ENCODE measurements at regions of chr7 and their contacts with region 1.

Region 1: DNA sequence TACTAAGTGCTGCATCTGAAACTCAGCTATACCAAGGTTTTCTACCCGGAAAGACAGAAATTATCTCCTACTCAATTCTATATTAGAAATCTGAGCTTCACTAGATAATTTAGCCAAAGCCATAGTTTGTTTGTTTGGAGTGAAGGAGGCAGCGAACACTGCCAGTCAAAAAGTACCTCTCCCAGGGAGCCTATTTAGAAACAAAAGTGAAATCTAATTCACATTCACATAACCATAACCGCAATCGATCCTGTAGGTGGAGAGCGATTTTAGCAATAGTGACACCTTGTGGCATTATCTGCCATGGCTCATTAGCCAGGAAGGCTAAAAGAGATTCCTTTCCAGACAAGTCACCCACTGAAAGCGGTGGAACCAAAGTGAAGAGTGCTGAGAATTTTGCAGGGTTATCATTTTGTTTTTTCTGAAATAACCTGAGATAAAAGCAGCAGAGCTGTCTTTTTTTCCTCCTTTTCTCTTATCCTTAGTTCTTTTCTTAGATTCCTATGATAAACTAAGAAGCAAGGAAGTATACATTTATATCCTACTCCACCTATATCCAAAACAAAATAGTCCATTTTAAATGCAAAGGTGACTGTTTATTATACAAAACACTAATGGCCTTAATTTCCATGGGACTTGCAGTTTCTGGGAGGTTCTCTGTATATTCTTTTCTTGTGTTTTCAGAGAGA is 83.7 kb upstream of the BET1 start:
- DNase-seq: peak; percentile 72
- H3K4me3 Mint-ChIP-seq: peak overlapping the region; percentile 41
- H3K27ac Mint-ChIP-seq: no peak overlapping the region
- H3K4me1 Mint-ChIP-seq: peaks cover 14% of the 10 kb centered on the region
- H3K27me3 Mint-ChIP-seq: peaks cover 15% of the 10 kb centered on the region

Region 2: GRCh38 chr7:93178212-93178611 is 909.6 kb before region 1 on chr7:
- CTCF ChIA-PET with region 1: no interaction called
- intact Hi-C with region 1: loop called (anchors 2 kb)
- DNase-seq: no peak
- H3K4me3 Mint-ChIP-seq: no peak overlapping the region
- H3K27ac Mint-ChIP-seq: no peak overlapping the region
- H3K4me1 Mint-ChIP-seq: no peaks in the 10 kb centered on the region
- H3K27me3 Mint-ChIP-seq: peaks cover 24% of the 10 kb centered on the region

Region 3: GRCh38 chr7:93390660-93391059 is 697.1 kb before region 1 on chr7:
- CTCF ChIA-PET with region 1: no interaction called
- intact Hi-C with region 1: no loop called
- DNase-seq: no peak
- H3K4me3 Mint-ChIP-seq: no peak overlapping the region
- H3K27ac Mint-ChIP-seq: no peak overlapping the region
- H3K4me1 Mint-ChIP-seq: no peaks in the 10 kb centered on the region
- H3K27me3 Mint-ChIP-seq: peaks cover 5% of the 10 kb centered on the region

Region 4: GRCh38 chr7:93442478-93443224 is 645.2 kb before region 1 on chr7:
- CTCF ChIA-PET with region 1: no interaction called
- intact Hi-C with region 1: loop called (anchors 1 kb)
- DNase-seq: peak; percentile 46
- H3K4me3 Mint-ChIP-seq: no peak overlapping the region
- H3K27ac Mint-ChIP-seq: no peak overlapping the region
- H3K4me1 Mint-ChIP-seq: no peaks in the 10 kb centered on the region
- H3K27me3 Mint-ChIP-seq: no peaks in the 10 kb centered on the region

Region 5: DNA sequence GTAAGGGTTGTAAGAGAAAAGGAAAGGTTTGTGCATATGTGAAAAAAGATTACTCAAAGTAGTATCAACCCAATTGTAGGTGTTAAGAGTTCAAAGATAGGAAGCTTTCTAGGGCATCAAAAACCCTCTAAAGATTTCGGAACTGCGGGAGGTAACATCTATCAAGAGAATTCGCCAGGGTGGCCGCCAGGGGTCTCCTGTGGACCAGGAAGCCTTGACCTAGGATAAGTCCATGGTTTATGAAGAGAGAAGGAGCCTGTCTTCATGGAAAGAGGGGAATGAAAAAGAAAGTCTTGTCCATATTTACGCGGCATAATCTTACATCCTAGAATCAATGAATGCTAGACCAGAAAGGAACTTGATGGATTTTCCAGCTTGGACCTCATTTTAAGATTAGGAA is 372.6 kb before region 1 on chr7:
- CTCF ChIA-PET with region 1: interaction called, 4 read pairs
- intact Hi-C with region 1: loop called (anchors 1 kb)
- DNase-seq: peak; percentile 49
- H3K4me3 Mint-ChIP-seq: no peak overlapping the region
- H3K27ac Mint-ChIP-seq: no peak overlapping the region
- H3K4me1 Mint-ChIP-seq: no peaks in the 10 kb centered on the region
- H3K27me3 Mint-ChIP-seq: peaks cover 9% of the 10 kb centered on the region

Region 6: DNA sequence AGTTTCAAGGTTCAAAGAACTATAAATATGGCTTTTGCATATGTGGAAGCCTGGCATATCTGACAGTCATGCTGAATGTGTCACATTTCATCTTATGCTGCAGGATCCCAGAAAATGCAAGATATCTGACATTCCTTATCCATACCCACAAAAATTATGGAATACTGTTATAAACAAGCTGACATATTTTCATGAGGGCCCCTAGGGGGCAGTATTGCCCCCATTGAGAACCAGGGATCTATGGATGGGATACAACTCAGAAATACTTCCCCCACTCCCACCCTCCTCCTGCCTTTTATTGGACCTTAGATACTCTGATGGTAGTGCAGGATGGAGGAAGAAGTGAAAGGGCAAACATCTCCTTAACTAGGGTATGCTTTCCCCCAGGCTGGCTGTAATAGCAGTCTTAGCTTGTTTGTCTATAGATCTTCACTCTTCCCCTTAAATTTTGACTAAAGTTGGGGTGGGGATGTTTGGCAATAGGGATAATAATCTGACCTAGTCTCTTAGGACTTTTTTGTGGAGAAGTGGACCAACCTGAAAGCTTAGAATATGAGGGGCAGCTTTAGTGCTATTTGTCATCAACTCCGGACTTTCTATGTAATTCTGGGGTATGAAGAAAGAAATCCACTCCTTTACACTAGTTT is 184.9 kb before region 1 on chr7:
- CTCF ChIA-PET with region 1: interaction called, 18 read pairs
- intact Hi-C with region 1: loop called (anchors 1 kb)
- DNase-seq: peak; percentile 9
- H3K4me3 Mint-ChIP-seq: no peak overlapping the region
- H3K27ac Mint-ChIP-seq: no peak overlapping the region
- H3K4me1 Mint-ChIP-seq: no peaks in the 10 kb centered on the region
- H3K27me3 Mint-ChIP-seq: peaks cover 27% of the 10 kb centered on the region

Region 7: DNA sequence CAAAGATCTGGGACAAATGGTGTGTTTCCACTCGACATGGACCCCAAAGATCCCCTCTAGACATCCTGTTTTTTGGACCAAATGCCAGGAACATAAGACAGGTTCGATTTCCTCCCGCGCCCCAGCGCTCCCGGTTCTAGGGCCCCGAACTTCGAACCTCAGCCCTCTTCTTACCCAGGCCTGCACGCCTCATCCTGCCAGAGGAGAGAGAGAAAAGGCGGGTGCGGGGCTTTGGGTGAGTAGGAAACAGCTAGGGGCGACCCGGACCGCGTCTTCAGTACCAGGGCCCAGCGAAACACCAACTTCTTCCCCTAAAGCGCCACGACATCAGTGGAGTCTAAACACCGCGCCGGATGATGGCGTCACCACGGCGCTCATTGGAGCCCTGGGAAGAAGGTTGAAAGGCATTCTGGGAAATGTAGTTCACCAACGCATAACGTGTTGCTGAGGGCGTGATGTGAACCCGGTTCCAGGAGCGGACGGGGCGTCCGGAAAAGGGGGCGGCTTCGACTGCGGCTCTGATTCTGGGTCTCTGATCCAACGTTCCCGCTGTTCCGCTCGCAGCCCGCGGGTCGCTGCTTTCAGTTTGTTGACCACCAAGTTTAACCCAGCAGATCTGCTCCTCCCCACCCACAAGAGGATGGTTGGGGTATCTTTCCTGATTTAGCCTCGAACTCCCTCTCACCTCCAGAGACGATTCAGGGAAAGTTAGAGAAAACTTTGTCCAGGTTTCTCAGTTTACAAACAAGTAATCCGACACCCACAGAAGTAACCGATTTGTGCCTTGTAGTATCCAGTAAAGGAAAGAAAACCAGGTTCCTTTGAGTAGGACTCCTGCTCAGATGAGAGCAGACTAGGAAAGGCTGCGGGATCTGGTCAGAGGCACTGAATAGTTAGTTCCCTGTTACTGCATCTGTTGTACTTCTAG is 83.5 kb before region 1 on chr7 and contains the start of gene BET1:
- CTCF ChIA-PET with region 1: no interaction called
- intact Hi-C with region 1: loop called (anchors 1 kb)
- DNase-seq: peak; percentile 94
- H3K4me3 Mint-ChIP-seq: peak within 1 kb of the TSS; percentile 99
- H3K27ac Mint-ChIP-seq: peak within 1 kb of the TSS; percentile 94
- H3K4me1 Mint-ChIP-seq: peaks cover 34% of the 10 kb centered on the region
- H3K27me3 Mint-ChIP-seq: peaks cover 6% of the 10 kb centered on the region
- total RNA-seq, gene BET1: 21.5 to 25.9 TPM

Region 8: GRCh38 chr7:94115316-94115715 is 27.5 kb after region 1 on chr7:
- CTCF ChIA-PET with region 1: no interaction called
- intact Hi-C with region 1: no loop called
- DNase-seq: no peak
- H3K4me3 Mint-ChIP-seq: no peak overlapping the region
- H3K27ac Mint-ChIP-seq: no peak overlapping the region
- H3K4me1 Mint-ChIP-seq: no peaks in the 10 kb centered on the region
- H3K27me3 Mint-ChIP-seq: peaks cover 2% of the 10 kb centered on the region

Region 9: GRCh38 chr7:94154858-94155257 is 67.0 kb after region 1 on chr7:
- CTCF ChIA-PET with region 1: no interaction called
- intact Hi-C with region 1: no loop called
- DNase-seq: no peak
- H3K4me3 Mint-ChIP-seq: no peak overlapping the region
- H3K27ac Mint-ChIP-seq: no peak overlapping the region
- H3K4me1 Mint-ChIP-seq: no peaks in the 10 kb centered on the region
- H3K27me3 Mint-ChIP-seq: peaks cover 8% of the 10 kb centered on the region

Region 10: DNA sequence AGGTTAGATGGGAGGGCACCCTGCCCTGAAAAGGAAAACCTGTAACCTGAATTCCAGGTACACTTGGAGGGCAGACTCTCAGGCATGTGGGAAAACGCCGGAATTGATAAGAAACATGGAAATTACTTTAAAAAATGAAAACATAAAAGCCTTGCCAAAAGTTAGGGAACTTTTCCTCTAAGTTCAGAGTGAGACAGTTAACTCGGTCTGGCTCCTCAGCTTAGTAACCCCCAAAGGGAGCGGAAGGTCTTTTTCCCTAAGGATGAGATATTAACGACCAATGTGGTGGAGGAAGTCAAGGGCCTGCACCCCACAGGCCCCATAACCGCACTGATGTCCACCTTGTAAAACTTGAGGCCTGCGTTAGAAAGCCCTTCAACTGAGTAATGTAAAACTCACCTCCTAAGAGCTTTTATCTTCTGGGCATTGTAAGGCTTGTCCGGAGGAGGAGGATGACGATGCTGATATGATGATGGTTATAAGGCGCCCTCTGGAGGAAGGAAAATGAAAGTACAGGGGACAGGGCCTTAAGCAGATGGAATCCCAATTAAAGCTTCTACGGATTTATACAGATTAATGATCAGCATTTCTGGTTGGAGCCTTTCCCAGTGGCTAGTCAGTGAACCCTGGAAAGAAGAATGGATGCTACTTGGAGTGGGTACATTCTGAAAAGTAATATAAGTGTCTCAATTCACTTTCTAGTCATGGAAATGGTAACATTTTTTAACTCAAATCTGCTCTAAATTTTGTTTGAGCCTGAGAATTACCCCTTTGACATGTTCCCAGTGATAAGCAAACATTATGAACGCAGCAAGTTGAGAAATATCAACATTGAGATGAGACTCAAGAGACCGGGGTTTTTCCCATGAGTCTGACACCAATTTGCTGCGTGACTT is 307.6 kb after region 1 on chr7:
- CTCF ChIA-PET with region 1: interaction called, 3 read pairs
- intact Hi-C with region 1: loop called (anchors 1 kb)
- DNase-seq: peak; percentile 46
- H3K4me3 Mint-ChIP-seq: no peak overlapping the region
- H3K27ac Mint-ChIP-seq: no peak overlapping the region
- H3K4me1 Mint-ChIP-seq: peaks cover 7% of the 10 kb centered on the region
- H3K27me3 Mint-ChIP-seq: peaks cover 35% of the 10 kb centered on the region